Common myeloid progenitor, CD34-positive (primary cell): ENCODE measurements at regions of chr15 and their contacts with region 1.

Region 1: GRCh38 chr15:88246666-88247446 is 9.7 kb downstream of the NTRK3 start:
- DNase-seq: peak; percentile 63 to 84 (median 78)
- H3K4me3 ChIP-seq: peak overlapping the region in 1 of 7 experiments; percentile 32
- H3K27ac ChIP-seq: no peak overlapping the region
- H3K4me1 ChIP-seq: peaks cover 0 to 3% (median 0%) of the 10 kb centered on the region in 4 experiments
- H3K27me3 ChIP-seq: peaks cover 0 to 13% (median 6%) of the 10 kb centered on the region in 5 experiments

Region 2: DNA sequence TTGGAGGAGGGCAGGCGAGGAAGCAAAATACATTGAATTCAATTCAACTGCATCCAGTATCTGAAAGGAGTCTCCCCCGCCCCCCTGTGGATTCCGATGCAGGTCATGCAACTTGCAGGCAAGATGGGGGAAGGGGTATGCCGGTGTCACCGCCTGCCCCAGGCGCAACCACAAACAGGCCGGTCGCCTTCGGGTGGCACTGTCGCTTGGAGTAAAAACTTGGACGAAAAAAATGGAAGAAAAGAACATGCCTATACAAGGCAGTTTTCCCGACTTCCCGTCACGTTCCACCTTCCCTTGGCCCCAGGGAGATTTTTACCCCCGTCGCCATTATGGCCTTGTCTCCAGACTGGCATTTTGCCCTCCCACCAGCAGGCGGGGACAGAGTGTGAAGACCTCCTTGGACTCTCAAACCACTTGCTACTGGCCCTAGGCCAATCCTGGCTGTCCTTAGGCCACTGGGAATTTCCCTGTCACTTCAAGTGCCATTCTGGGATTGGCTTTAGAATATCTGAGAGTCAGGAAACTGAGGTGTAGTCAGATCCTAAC is 11.3 kb after region 1 on chr15:
- CTCF ChIA-PET with region 1: interaction called, 13 read pairs
- POLR2A ChIA-PET with region 1: no interaction called
- DNase-seq: peak in 2 of 3 donors; percentile 22 to 27
- H3K4me3 ChIP-seq: peak overlapping the region in 2 of 7 experiments; percentile 16 to 46
- H3K27ac ChIP-seq: no peak overlapping the region
- H3K4me1 ChIP-seq: peaks cover 0 to 28% (median 18%) of the 10 kb centered on the region in 4 experiments
- H3K27me3 ChIP-seq: peaks cover 6 to 88% (median 44%) of the 10 kb centered on the region in 5 experiments